Right lobe of liver (tissue), 6 donors: ENCODE measurements at regions of chr13 and their contacts with region 1.

Region 1: GRCh38 chr13:109145631-109146030 is 516.2 kb downstream of the MYO16 start:
- DNase-seq: no peak
- ATAC-seq: peak; percentile 92 to 98 (median 94)
- H3K4me3 ChIP-seq: no peak overlapping the region
- H3K27ac ChIP-seq: no peak overlapping the region
- H3K4me1 ChIP-seq: no peaks in the 10 kb centered on the region
- H3K27me3 ChIP-seq: no peaks in the 10 kb centered on the region
- CTCF ChIP-seq: peak; percentile 75 to 88 (median 80)
- POLR2A ChIP-seq: no peak

Region 2: DNA sequence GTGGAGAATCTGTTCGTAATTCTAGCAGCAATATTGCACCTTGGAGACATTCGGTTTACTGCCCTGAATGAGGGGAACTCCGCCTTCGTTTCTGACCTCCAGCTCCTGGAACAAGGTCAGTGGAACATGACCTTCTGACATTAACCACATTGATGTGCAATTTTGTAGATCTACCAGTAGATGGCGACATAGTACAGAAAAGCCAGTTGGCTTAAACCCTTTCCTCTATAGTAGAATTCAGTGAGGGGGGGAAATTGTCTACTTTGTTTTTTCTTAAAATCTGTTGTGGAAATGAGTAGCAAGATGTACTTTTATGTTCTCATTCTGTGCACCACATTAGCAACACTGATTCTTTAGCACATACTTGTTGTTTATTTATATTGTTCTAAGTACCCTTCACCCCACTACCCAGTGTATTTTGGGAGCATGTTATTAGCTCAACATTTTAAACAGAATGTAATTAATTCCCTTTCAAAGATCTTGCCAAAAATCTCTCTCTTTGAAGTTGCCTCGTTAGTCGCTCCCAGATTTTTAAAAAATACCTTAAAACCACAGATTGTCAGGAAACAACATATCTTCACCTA is 184.0 kb before region 1 on chr13:
- intact Hi-C with region 1: loop called in 1 of 2 experiments (anchors 10 kb)
- DNase-seq: no peak
- ATAC-seq: peak; percentile 91 to 99 (median 96)
- H3K4me3 ChIP-seq: no peak overlapping the region
- H3K27ac ChIP-seq: no peak overlapping the region
- H3K4me1 ChIP-seq: no peaks in the 10 kb centered on the region
- H3K27me3 ChIP-seq: no peaks in the 10 kb centered on the region
- CTCF ChIP-seq: peak; percentile 86 to 91 (median 90)
- POLR2A ChIP-seq: no peak

Region 3: DNA sequence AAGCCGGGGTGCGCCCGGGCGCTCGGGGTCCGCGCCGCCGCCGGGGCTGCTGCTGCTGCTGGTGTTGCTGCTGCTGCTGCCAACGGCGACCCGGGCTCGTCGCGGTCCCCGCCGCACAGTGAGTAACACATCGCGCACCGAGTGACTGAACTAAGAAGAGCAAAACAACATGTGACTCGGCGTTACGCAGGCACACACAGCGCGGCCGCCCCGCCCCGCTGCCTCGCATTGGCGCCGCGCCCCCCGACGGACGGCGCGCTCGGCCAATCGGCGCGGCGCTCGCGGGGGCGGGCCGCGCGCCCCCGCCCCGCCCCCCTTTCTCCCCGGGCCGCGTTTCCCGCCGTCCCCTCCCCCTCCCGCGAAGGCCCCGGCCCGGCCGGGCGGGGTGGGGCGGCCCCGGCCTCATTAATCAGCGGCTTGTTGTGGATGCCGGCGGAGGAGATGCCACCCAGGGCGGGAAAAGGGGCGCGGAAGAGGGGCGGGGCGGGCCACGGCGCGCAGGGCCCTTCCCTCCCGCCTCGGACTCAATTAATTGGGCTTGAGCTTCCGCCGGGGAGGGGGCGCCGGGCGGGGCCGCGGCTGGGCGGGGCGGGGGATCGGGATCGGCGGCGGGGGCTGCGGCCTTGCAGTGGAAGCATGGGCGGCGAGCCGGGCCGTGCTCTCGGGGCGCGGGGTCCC is 641.0 kb after region 1 on chr13 and contains the start of gene IRS2:
- intact Hi-C with region 1: loop called (anchors 10 kb)
- DNase-seq: peak; percentile 94 to 97 (median 96)
- ATAC-seq: peak; percentile 63 to 73 (median 68)
- H3K4me3 ChIP-seq: peak within 1 kb of the TSS; percentile 67 to 75 (median 74)
- H3K27ac ChIP-seq: peak within 1 kb of the TSS; percentile 89 to 98 (median 97)
- H3K4me1 ChIP-seq: peaks cover 0 to 32% (median 12%) of the 10 kb centered on the region in 4 donors
- H3K27me3 ChIP-seq: no peaks in the 10 kb centered on the region
- CTCF ChIP-seq: no peak
- POLR2A ChIP-seq: peak; percentile 99
- total RNA-seq, gene IRS2: 8.8 to 26.0 (median 17.5) TPM